ENCODE measurements at regions of chr20 and their contacts with region 1.

Region 1: DNA sequence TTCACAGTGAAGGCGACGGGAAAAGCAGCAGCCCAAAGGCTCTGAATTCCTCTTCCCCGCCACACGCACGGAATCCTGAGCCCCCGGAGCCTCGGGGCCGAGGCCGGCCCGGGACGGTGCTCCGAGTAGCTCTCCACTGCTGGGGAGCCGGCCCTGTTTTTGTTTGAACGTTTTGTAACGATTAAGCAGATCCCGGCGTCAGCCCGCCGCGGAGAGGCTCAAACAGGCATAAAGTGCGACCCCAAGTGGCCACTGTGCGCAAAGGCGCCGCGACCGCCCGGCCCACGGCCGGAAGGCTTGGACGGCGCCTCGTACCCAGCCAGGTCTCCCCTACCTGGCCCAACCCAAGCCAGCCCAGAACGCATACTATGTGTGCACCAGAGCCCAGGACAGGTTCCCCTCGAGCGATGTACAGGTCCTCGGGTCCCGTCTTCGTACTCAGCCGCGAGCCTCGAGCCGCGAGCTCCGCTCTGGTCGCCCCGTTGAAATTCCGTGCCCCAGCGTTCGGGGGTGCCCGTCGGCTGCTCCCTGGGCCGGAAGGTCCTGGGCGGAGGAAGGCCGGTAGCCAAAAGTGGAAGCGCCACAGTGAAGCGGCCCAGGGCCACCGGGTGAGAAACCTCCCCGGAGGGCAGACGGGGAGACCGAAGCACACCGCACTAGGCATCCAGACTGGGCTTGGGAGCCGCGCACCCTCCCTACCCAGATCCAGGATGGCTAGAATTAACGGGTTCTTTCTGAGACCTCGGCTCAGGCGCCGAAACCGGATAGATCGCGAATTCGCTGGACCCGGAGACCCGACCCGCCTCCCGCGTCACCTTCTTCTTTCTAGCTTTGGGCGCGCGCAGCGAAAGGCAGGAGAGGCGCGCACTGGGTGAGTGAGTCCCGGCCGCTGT is 1.2 kb upstream of the MAFB start:
- DNase-seq: peak; percentile 97
- ATAC-seq: peak; percentile 58

Region 2: DNA sequence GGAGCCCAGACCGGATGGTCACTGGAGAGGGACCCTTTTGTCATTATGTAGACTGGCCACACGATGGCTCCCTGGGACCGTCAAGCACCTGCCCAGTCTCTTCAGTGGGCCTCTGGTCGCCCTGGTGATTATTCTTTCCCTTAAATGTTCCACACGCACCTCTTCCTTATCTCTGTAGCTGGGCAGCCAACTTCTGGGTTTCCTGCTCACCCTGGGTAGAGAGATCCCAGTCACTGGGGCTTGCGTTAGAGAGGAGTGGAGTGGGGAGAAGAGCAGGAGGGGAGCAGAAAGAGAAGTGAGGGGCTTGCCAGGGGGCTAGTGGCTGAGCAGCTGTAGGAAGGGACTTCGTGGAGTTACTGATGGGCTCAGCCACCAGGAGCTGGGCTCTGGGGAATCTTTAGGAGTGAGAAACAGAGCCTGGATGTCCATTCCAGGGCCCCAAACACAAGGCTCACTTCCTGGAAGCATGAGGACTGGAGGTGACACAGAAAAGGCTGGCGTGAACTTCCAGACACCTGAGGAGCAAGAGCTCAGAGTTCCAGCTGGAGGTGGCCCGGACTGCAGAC is 1577.9 kb before region 1 on chr20:
- intact Hi-C with region 1: loop called (anchors 10 kb)
- DNase-seq: no peak
- ATAC-seq: peak; percentile 83

Region 3: GRCh38 chr20:39885975-39886649 is 804.1 kb before region 1 on chr20:
- intact Hi-C with region 1: loop called (anchors 5 kb)
- DNase-seq: peak; percentile 81
- ATAC-seq: peak; percentile 89

Region 4: DNA sequence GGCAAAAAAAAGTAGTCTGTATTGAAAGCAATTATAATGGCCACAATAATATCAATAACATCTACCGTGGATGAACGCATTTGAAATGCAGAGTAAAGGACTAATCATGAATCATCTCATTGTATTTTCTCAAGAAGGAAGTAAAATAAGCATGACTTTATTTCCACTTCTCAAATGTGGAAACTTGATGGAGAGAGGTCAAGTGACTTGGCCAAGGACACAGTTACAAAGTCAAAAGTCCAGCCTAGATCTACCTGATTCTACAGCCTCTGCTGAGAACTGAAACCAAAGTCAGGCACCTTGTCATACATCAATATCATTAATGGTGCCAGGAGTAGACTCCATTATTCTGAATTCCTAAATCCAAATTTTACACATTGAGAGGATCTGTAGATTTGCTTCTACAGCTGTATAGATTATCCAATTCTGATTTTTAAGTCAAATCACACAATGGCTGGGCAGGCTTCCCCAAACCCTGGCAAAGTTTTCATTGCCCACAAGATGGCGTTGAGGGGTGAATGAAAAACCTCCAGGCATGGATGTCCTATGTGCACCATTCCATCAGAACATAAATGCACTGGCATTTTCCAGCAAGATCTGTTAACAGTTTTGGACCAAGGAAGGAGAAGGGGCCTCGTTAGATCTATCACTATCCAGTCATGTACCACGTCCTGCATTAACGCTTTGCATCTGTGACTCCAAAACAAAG is 424.2 kb before region 1 on chr20:
- intact Hi-C with region 1: loop called (anchors 5 kb)
- DNase-seq: no peak
- ATAC-seq: peak; percentile 63

Region 5: GRCh38 chr20:40463171-40463570 is 227.0 kb before region 1 on chr20:
- intact Hi-C with region 1: loop called (anchors 10 kb)
- DNase-seq: peak; percentile 64
- ATAC-seq: no peak

Measured in Right ventricle myocardium inferior (tissue), 1 donor.